WTC11 (cell line): ENCODE measurements at regions of chr7 and their contacts with region 1.

Region 1: DNA sequence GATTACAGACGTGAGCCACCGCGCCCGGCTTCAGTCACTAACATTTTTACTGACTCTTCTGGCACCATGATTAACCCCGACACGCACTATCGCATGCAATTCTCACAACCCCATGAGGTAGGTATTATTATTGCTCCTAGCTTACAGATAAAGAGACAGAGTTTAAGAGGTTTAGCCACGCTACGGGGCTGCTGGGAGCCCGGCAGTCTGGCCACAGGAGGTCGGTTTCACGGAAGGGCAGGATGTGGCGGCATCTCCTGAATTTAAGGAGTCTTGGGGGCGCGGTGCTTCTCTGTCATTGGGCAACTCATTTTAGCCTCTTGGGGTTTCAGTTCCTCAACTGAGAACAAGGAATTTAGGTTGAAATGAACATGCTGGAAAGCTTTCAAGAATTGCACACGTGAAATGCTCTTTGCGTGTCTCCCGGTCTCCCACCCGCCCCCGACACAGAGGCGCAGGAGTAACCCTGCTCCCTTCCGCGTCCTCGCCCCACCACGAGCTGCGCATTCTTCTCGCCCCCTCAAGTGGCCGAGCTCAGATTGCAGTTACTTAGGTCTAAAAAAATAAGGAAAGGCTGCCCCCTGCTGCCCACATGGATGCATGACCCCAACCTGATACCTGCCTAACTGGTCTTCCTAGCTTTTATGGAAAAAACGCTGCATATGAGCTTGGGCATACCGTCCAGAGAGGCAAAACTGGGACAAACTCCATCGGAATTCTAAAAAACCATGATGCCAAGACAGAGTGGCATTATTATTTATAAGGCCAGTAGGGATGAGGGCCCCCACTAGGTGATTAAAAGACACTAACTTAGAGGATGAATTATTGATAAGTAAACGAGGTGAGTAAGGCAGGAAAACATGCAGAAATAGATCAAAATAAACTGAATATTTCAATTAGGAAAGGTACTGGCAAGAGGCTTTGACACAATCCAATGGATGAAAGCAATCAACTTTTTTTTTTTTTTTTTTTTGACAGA is 12.4 kb downstream of the PRSS2 start:
- DNase-seq: peak; percentile 91
- ATAC-seq: peak; percentile 82
- H3K4me3 Mint-ChIP-seq: peak overlapping the region; percentile 66
- H3K27ac Mint-ChIP-seq: no peak overlapping the region
- H3K4me1 Mint-ChIP-seq: peaks cover 7% of the 10 kb centered on the region
- H3K27me3 Mint-ChIP-seq: 0 out of 2 replicates have a peak, but pooled peaks cover 6% of the 10 kb centered on the region
- CTCF ChIP-seq: peak; percentile 93

Region 2: DNA sequence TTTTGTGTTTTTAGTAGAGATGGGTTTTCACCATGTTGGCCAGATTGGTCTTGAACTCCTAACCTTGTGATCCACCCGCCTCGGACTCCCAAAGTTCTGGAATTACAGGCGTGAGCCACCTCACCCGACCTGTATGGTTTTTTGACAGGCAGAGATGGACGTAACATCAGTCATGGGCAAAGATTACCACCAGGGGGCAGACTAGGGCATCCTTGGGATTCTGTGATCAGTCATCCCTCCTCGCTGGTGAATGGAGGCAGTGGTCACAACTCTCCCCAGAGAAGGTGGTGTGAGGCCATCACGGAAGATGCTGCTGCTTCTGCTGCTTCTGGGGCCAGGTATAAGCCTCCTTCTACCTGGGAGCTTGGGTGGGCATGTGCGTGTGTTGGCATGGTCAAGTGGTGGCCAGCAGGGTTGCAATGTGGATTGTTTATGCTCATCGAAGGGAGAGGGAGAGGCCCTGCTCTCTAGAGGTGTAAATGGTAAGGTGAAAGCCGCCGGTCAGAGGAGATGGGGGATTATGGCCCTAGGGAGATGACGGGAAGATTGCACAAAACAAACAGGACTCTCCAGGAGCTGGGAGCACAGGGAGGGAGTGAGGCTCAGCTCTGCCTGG is 156.7 kb before region 1 on chr7:
- CTCF ChIA-PET with region 1: interaction called, 174 read pairs
- POLR2A ChIA-PET with region 1: interaction called, 4 read pairs
- DNase-seq: peak; percentile 89
- ATAC-seq: peak; percentile 97
- H3K4me3 Mint-ChIP-seq: no peak overlapping the region
- H3K27ac Mint-ChIP-seq: no peak overlapping the region
- H3K4me1 Mint-ChIP-seq: peaks cover 2% of the 10 kb centered on the region; the same call in 1 of the 2 replicates
- H3K27me3 Mint-ChIP-seq: peaks cover 3% of the 10 kb centered on the region
- CTCF ChIP-seq: peak; percentile 76

Region 3: DNA sequence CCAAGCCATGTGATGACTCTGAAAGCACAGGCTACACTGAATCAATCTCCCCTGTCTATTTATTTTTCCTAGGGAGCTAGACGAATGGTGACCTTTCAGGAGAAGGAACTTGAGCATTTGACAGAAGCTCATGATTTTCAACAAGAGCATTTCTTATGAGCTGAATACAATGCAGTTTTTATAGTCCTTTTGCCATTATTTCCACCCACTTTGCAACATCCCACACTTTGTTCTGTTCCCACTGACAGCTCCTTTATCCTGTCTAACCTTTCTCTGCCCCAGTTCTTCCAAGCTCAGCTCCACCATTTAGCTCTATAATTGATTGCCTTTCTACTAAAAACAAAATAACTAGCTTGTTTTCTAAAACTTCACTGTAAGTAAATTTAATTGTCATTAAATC is 125.8 kb before region 1 on chr7:
- CTCF ChIA-PET with region 1: interaction called, 19 read pairs
- POLR2A ChIA-PET with region 1: no interaction called
- DNase-seq: no peak
- ATAC-seq: no peak
- H3K4me3 Mint-ChIP-seq: no peak overlapping the region
- H3K27ac Mint-ChIP-seq: no peak overlapping the region
- H3K4me1 Mint-ChIP-seq: peaks cover 7% of the 10 kb centered on the region
- H3K27me3 Mint-ChIP-seq: no peaks in the 10 kb centered on the region; the same call in none of the 2 replicates
- CTCF ChIP-seq: no peak

Region 4: DNA sequence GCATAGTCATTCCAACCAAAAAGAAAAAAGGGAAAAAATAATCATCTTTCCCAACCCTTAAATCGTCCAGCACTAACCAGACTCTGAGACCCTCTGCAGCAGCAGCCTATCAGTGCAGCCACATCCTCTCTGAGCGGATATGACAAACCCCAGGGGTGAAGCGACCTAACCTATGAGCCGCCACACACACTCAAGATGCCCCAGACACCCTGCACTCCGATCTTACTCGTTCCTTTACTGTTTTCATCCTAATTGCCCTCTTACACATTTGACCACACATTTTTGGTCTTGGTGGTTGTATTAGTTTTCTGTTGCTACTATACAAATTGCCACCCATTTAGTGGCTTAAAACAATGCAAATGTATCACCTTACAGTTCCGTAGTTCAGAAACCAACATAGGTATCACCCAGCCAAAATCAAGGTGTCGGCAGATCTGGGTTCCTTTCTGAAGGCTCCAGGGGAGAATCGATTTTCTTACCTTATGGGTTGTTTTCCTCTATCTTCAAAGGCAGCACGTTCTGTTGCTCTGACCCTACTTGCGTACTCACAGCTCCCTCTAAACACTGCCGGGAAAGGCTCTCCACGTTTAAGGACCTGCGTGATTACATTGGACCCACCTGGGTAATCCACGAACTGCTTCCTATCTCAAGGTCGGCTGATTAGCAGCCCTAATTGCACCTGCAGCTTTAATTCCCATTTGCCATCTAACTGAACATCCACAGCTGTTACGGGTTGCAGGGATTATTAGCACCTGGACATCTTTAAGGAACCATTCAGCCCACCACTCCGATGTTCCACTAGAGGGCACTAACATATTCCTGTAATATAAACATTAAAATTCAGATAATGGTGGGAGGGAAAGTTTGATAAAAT is 71.2 kb before region 1 on chr7:
- CTCF ChIA-PET with region 1: interaction called, 21 read pairs
- POLR2A ChIA-PET with region 1: no interaction called
- DNase-seq: no peak
- ATAC-seq: peak; percentile 60
- H3K4me3 Mint-ChIP-seq: no peak overlapping the region
- H3K27ac Mint-ChIP-seq: no peak overlapping the region; the same call in 1 of the 2 replicates
- H3K4me1 Mint-ChIP-seq: peaks cover 53% of the 10 kb centered on the region
- H3K27me3 Mint-ChIP-seq: no peaks in the 10 kb centered on the region
- CTCF ChIP-seq: peak; percentile 35; the same call in 1 of the 2 replicates

Region 5: GRCh38 chr7:142835487-142835886 is 52.3 kb after region 1 on chr7:
- CTCF ChIA-PET with region 1: interaction called, 13 read pairs
- POLR2A ChIA-PET with region 1: no interaction called
- DNase-seq: no peak
- ATAC-seq: peak; percentile 77
- H3K4me3 Mint-ChIP-seq: no peak overlapping the region
- H3K27ac Mint-ChIP-seq: peak overlapping the region; percentile 24; the same call in 1 of the 2 replicates
- H3K4me1 Mint-ChIP-seq: peaks cover 10% of the 10 kb centered on the region
- H3K27me3 Mint-ChIP-seq: no peaks in the 10 kb centered on the region
- CTCF ChIP-seq: no peak

Region 6: DNA sequence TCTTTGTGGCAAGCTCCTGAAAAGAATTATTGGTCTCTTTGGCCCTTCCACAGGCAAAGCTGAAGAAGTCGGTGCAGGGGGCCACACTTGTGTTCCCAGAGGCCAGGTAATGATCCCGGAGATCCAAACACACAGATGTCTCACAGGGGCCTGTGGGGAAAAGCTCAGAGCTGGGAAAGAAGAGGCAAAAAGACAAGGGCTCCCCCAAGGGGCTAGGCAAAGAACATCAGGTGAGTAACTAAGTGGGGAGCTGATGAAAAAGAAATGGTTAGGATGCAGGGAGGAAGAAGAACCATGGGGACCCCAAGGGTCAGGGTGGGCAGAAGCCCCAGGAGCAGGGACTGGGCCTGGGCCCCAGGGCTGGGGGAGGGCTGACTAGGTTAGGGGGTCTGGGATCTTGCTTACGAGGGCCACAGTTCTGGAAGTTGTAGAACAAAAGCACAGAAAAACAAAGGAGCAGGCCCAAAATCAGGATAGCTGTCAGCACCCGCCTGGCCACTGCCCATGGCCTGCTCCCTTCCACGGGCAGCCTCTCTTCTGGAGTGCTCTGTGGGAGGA is 177.8 kb after region 1 on chr7:
- CTCF ChIA-PET with region 1: no interaction called
- POLR2A ChIA-PET with region 1: no interaction called
- DNase-seq: peak; percentile 23
- ATAC-seq: peak; percentile 30
- H3K4me3 Mint-ChIP-seq: no peak overlapping the region
- H3K27ac Mint-ChIP-seq: no peak overlapping the region
- H3K4me1 Mint-ChIP-seq: peaks cover 52% of the 10 kb centered on the region
- H3K27me3 Mint-ChIP-seq: peaks cover 3% of the 10 kb centered on the region; the same call in 1 of the 2 replicates
- CTCF ChIP-seq: no peak; the same call in 1 of the 2 replicates

Region 7: DNA sequence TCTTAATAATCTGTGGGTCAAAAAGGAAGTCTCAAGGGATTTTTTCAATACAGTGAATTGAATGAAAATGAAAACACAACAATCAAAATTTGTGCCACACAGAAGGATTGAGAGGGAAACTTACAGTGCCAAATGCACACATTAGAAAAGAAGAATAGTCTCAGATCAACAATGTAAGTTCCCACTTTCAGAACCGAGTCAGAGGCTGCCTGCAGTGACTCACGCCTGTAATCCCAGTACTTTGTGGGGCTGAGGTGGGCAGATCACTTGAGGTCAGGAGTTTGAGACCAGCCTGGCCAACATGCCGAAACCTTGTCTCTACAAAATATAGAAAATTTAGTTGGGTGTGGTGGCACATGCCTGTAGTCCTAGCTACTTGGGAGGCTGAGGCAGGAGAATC is 191.4 kb after region 1 on chr7:
- CTCF ChIA-PET with region 1: no interaction called
- POLR2A ChIA-PET with region 1: no interaction called
- DNase-seq: no peak
- ATAC-seq: no peak
- H3K4me3 Mint-ChIP-seq: no peak overlapping the region
- H3K27ac Mint-ChIP-seq: no peak overlapping the region
- H3K4me1 Mint-ChIP-seq: no peaks in the 10 kb centered on the region
- H3K27me3 Mint-ChIP-seq: no peaks in the 10 kb centered on the region; the same call in 1 of the 2 replicates
- CTCF ChIP-seq: no peak